CD4-positive, alpha-beta T cell (primary cell): ENCODE measurements at regions of chr7 and their contacts with region 1.

Region 1: GRCh38 chr7:15628876-15629275 is 57.6 kb downstream of the MEOX2 start:
- DNase-seq: no peak
- ATAC-seq: no peak
- H3K4me3 ChIP-seq: no peak overlapping the region
- H3K4me3 Mint-ChIP-seq: no peak overlapping the region
- H3K27ac ChIP-seq: no peak overlapping the region
- H3K27ac Mint-ChIP-seq: no peak overlapping the region
- H3K4me1 ChIP-seq: no peaks in the 10 kb centered on the region
- H3K4me1 Mint-ChIP-seq: no peaks in the 10 kb centered on the region
- H3K27me3 ChIP-seq: no peaks in the 10 kb centered on the region
- H3K27me3 Mint-ChIP-seq: no peaks in the 10 kb centered on the region
- CTCF ChIP-seq: no peak

Region 2: DNA sequence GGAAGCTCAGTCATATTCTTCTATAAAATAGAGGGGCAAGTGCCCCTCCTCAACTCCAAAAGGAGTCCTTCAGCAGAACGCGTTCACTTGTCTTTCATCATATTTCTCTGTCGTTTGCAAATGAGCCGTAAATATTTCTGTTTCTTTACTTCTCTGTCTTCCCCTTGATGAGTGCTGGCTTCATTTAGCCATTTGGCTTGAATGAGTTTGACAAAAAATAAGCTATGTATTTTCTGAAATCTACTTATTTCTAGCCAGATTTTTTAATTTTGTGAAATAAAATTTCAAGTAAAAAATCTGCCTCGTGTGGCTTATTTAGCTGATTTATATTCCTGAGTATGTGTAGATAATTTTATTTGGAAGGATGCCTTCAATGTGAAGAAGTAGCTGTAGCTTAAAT is 555.6 kb before region 1 on chr7:
- CTCF ChIA-PET with region 1: no interaction called
- POLR2A ChIA-PET with region 1: no interaction called
- intact Hi-C with region 1: no loop called
- DNase-seq: no peak
- ATAC-seq: no peak
- H3K4me3 ChIP-seq: no peak overlapping the region
- H3K4me3 Mint-ChIP-seq: no peak overlapping the region
- H3K27ac ChIP-seq: no peak overlapping the region
- H3K27ac Mint-ChIP-seq: no peak overlapping the region
- H3K4me1 ChIP-seq: no peaks in the 10 kb centered on the region
- H3K4me1 Mint-ChIP-seq: no peaks in the 10 kb centered on the region
- H3K27me3 ChIP-seq: no peaks in the 10 kb centered on the region
- H3K27me3 Mint-ChIP-seq: no peaks in the 10 kb centered on the region
- CTCF ChIP-seq: no peak

Region 3: DNA sequence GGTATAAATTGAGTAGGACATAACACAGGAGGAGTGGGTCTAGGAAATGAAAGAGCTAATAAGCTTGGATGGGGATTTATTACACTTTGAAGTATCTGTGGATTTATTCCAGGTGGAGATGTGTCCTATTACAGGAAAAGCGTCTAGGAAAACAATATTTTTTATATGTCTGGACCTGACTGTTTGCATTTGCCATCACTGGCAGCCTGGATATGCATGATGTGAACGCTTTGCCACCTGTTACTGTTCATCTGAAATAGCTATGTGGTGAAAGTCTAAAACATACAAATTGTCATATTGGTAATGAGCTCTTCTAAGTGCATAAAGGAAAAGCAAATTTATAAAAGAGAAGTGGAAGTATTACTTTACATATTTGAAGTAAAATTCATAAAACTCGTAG is 35.5 kb before region 1 on chr7:
- CTCF ChIA-PET with region 1: no interaction called
- POLR2A ChIA-PET with region 1: no interaction called
- intact Hi-C with region 1: no loop called
- DNase-seq: no peak
- ATAC-seq: no peak
- H3K4me3 ChIP-seq: no peak overlapping the region
- H3K4me3 Mint-ChIP-seq: no peak overlapping the region
- H3K27ac ChIP-seq: no peak overlapping the region
- H3K27ac Mint-ChIP-seq: no peak overlapping the region
- H3K4me1 ChIP-seq: no peaks in the 10 kb centered on the region
- H3K4me1 Mint-ChIP-seq: no peaks in the 10 kb centered on the region
- H3K27me3 ChIP-seq: no peaks in the 10 kb centered on the region
- H3K27me3 Mint-ChIP-seq: no peaks in the 10 kb centered on the region
- CTCF ChIP-seq: no peak

Region 4: GRCh38 chr7:15643000-15643705 is 14.3 kb after region 1 on chr7:
- CTCF ChIA-PET with region 1: no interaction called
- POLR2A ChIA-PET with region 1: no interaction called
- intact Hi-C with region 1: loop called in 1 of 2 experiments (anchors 1 kb)
- DNase-seq: no peak
- ATAC-seq: no peak
- H3K4me3 ChIP-seq: no peak overlapping the region
- H3K4me3 Mint-ChIP-seq: no peak overlapping the region
- H3K27ac ChIP-seq: no peak overlapping the region
- H3K27ac Mint-ChIP-seq: no peak overlapping the region
- H3K4me1 ChIP-seq: no peaks in the 10 kb centered on the region
- H3K4me1 Mint-ChIP-seq: no peaks in the 10 kb centered on the region
- H3K27me3 ChIP-seq: no peaks in the 10 kb centered on the region
- H3K27me3 Mint-ChIP-seq: no peaks in the 10 kb centered on the region
- CTCF ChIP-seq: no peak